Psoas muscle (tissue), 8 donors: ENCODE measurements at regions of chr18 and their contacts with region 1.

Region 1: GRCh38 chr18:57561728-57562423 is 24.6 kb downstream of the FECH start:
- DNase-seq: no peak
- ATAC-seq: peak in 2 of 4 donors; percentile 52 to 76
- H3K4me3 ChIP-seq: no peak overlapping the region
- H3K27ac ChIP-seq: no peak overlapping the region
- H3K4me1 ChIP-seq: no peaks in the 10 kb centered on the region
- H3K27me3 ChIP-seq: no peaks in the 10 kb centered on the region
- CTCF ChIP-seq: peak; percentile 88

Region 2: GRCh38 chr18:56748698-56749268 is 813.1 kb before region 1 on chr18:
- intact Hi-C with region 1: loop called in 1 of 2 experiments (anchors 5 kb)
- DNase-seq: no peak
- ATAC-seq: no peak
- H3K4me3 ChIP-seq: no peak overlapping the region
- H3K27ac ChIP-seq: no peak overlapping the region
- H3K4me1 ChIP-seq: peaks cover 6% of the 10 kb centered on the region
- H3K27me3 ChIP-seq: no peaks in the 10 kb centered on the region
- CTCF ChIP-seq: peak; percentile 66

Region 3: DNA sequence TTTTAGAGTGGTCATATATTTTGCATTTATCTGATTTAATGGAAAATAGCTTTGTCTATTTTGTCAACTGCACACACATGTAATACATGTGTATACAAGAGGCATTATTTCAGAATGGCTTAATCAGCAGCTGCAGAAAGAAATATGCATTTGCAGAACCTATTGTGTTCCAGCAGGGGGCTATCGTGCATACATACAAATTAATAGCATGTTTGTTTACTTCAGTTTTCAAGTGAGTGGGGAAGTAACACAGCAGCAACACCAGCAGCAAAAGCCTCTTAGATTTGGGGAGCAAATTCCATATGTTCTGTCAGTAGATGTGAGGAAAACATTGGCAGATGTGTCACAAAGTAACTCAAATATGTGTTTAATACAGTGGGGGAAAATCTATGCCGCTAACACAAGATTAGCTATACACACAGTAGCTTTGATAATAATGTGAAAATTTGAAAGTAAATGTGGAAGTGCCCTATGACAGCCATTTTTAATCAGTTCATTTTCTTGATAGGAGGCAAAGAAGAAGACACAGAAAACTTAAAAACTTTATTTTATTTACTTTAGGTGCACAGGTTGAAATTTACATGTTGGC is 692.6 kb before region 1 on chr18:
- intact Hi-C with region 1: loop called in 1 of 2 experiments (anchors 5 kb)
- DNase-seq: no peak
- ATAC-seq: peak in 3 of 4 donors; percentile 43 to 75 (median 64)
- H3K4me3 ChIP-seq: no peak overlapping the region
- H3K27ac ChIP-seq: no peak overlapping the region
- H3K4me1 ChIP-seq: no peaks in the 10 kb centered on the region
- H3K27me3 ChIP-seq: no peaks in the 10 kb centered on the region
- CTCF ChIP-seq: peak; percentile 66

Region 4: DNA sequence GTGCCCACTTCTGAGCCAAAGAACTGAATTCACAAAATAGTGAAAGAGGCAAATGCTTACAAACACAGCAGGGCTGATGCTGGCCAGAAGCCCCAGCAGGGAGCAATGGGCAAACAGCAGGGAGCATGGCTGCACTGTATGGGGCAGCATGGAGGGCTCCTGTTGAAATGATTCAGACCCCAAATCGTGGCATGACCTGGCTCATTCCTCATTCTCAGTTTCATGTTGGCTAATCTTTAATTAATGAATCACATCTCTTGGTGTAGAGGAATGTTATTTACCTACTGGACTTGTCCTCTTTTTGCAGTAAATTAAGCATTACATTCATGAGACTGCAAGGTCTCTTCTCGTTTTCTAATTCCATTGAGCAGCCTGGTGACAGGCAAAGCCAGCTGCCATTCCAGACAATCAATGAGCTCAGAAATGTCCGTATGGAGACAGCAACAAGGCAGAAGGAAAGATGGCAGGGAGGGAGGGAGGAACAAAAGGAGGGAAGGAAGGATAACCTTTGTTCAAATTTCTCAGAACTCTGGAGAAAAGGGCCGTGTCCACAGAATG is 294.4 kb before region 1 on chr18:
- intact Hi-C with region 1: no loop called
- DNase-seq: no peak
- ATAC-seq: no peak
- H3K4me3 ChIP-seq: no peak overlapping the region
- H3K27ac ChIP-seq: no peak overlapping the region
- H3K4me1 ChIP-seq: no peaks in the 10 kb centered on the region
- H3K27me3 ChIP-seq: no peaks in the 10 kb centered on the region
- CTCF ChIP-seq: no peak

Region 5: GRCh38 chr18:57461652-57462269 is 100.1 kb before region 1 on chr18:
- intact Hi-C with region 1: no loop called
- DNase-seq: no peak
- ATAC-seq: no peak
- H3K4me3 ChIP-seq: no peak overlapping the region
- H3K27ac ChIP-seq: no peak overlapping the region
- H3K4me1 ChIP-seq: no peaks in the 10 kb centered on the region
- H3K27me3 ChIP-seq: peaks cover 0 to 6% (median 5%) of the 10 kb centered on the region in 3 donors
- CTCF ChIP-seq: no peak

Region 6: DNA sequence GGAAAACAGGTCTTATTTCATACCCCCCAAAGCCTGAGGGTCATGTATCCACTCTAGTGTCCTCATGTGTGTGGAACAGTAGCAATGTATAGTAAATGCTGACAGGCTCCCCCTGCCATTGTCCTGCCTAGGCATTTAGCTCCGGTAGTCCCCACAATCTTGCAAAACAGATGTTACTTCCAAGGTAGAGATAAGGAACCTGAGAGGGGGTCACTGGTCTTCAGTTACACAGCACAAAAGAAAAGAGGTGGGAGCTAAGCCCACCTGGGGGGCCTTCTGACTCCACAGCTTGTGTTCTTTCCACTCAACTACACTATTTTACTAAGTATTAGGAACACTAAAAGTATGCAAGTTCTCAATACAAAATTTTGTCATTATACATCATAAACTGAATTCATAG is 42.0 kb after region 1 on chr18:
- intact Hi-C with region 1: loop called in 1 of 2 experiments (anchors 5 kb)
- DNase-seq: no peak
- ATAC-seq: no peak
- H3K4me3 ChIP-seq: no peak overlapping the region
- H3K27ac ChIP-seq: no peak overlapping the region
- H3K4me1 ChIP-seq: no peaks in the 10 kb centered on the region
- H3K27me3 ChIP-seq: no peaks in the 10 kb centered on the region
- CTCF ChIP-seq: no peak